Gastrocnemius medialis (tissue), 4 donors: ENCODE measurements at regions of chr15 and their contacts with region 1.

Region 1: DNA sequence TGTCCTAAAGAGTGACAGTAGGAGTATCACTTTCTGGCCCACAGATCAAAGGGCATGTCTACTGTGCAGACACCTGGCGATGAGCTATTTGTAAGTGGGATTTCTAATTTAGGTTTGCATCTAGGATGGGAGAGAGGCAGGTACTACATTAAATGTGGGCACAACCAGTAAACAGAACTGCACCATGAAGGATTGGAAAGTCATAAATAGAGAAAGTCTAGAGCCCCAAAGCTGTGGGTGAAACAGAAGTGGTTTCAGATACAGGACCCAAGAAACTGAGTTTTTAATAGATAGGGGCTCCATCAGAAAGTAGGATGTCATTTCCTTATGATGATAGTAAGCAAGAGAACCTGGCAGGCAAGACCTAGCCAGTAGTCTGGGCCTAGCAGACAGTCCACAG is 35.2 kb upstream of the SPPL2A start:
- DNase-seq: no peak
- ATAC-seq: no peak
- H3K4me3 ChIP-seq: no peak overlapping the region
- H3K27ac ChIP-seq: peak overlapping the region in 3 of 4 donors; percentile 84 to 93 (median 85)
- H3K4me1 ChIP-seq: peaks cover 17 to 23% of the 10 kb centered on the region in 2 donors
- H3K27me3 ChIP-seq: no peaks in the 10 kb centered on the region
- CTCF ChIP-seq: no peak
- POLR2A ChIP-seq: no peak

Region 2: DNA sequence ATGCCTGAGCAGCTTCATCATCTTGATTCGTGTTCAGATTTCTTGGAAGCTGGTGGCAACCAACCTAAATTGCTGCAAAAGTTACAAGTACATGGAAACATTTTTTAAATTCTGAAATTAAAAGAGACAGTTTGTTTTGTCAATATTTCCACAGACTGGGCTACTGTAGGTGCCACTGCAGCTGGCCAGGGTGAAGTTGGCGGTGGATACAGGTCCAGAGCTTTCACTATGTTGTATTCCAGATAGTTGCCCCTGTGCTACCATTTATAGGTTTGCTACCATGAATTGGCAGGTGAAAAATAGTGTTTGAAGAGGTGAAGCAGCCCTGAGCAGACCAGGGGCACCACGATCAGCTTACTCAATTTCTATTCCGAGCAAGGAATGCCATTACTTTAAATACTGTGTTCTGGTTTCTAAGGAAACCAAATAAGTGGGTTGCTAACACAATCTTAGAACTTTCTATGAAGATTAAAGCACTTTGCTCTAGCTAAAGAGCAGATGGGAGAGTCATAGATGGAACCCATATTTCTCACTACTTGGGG is 1815.8 kb before region 1 on chr15:
- in situ Hi-C with region 1: no loop called
- intact Hi-C with region 1: loop called (anchors 5 kb)
- DNase-seq: no peak
- ATAC-seq: no peak
- H3K4me3 ChIP-seq: no peak overlapping the region
- H3K27ac ChIP-seq: no peak overlapping the region
- H3K4me1 ChIP-seq: no peaks in the 10 kb centered on the region
- H3K27me3 ChIP-seq: no peaks in the 10 kb centered on the region
- CTCF ChIP-seq: no peak
- POLR2A ChIP-seq: no peak

Region 3: DNA sequence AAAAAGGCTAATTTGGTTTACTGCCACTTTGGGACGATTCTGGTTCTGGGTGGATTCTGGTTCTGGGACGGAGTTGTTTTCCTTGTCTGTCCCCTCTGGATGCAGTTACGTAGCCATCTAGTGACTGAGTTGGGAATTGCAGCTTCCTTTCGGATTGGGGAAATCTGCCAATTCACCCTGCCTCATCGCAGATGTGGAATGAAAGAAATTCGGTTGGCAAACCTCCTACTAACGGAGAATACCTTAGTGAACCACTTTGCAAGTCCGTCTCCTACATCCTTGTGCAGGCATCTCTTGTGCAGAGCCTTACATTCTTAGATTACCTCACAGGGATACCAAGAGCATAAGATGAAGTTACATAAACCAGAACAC is 76.3 kb after region 1 on chr15:
- in situ Hi-C with region 1: no loop called
- intact Hi-C with region 1: no loop called
- DNase-seq: peak; percentile 49 to 66
- ATAC-seq: peak; percentile 87 to 91
- H3K4me3 ChIP-seq: peak overlapping the region; percentile 44 to 53 (median 46)
- H3K27ac ChIP-seq: peak overlapping the region; percentile 60 to 74 (median 66)
- H3K4me1 ChIP-seq: peaks cover 0 to 4% of the 10 kb centered on the region in 2 donors
- H3K27me3 ChIP-seq: no peaks in the 10 kb centered on the region
- CTCF ChIP-seq: peak; percentile 90 to 97 (median 96)
- POLR2A ChIP-seq: no peak